HEK293 (cell line): ENCODE measurements at regions of chr11 and their contacts with region 1.

Region 1: GRCh38 chr11:73350908-73351636 is 25.1 kb upstream of the RELT start:
- H3K4me3 ChIP-seq: no peak overlapping the region
- H3K27ac ChIP-seq: no peak overlapping the region
- H3K4me1 ChIP-seq: no peaks in the 10 kb centered on the region
- CTCF ChIP-seq: peak; percentile 60

Region 2: DNA sequence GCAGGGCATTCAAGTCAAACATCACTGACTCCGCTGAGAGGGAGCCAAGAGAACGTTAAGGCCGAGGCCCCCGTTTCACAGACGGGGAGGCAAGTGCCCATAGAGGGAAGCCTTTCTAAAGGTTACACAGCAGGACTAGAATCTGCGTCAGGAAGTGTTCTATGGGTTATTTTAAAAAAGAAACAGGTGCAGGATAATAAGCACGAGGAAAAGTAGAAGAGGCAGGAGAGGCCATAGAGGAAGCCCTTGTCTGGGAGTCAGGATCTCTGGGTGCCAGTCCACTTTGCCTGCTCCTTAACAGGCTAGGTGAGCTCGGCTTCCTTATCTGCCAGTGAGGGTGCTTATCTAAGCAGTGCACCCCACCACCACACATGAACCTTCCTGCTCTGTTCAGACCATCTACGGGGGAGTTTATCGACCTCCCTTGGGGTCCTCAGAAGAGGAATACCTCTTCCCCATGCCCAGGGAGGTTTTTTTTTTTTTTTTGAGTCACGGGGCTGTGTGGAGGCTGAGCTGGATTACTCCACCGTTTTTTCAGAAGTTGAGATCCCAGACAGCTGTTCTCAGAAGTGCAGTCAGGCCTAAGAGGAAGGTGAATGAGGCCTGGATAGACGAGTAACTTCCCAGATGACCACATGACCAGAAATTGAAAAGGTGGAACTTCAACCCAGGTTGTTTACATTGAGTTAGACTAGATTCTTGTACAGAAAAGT is 207.8 kb before region 1 on chr11:
- CTCF ChIA-PET with region 1: no interaction called
- POLR2A ChIA-PET with region 1: no interaction called
- H3K4me3 ChIP-seq: no peak overlapping the region
- H3K27ac ChIP-seq: no peak overlapping the region; the same call in 1 of the 2 replicates
- H3K4me1 ChIP-seq: peaks cover 3% of the 10 kb centered on the region; the same call in 1 of the 2 replicates
- CTCF ChIP-seq: no peak

Region 3: GRCh38 chr11:73157053-73158010 is 193.7 kb before region 1 on chr11:
- CTCF ChIA-PET with region 1: no interaction called
- POLR2A ChIA-PET with region 1: no interaction called
- H3K4me3 ChIP-seq: no peak overlapping the region
- H3K27ac ChIP-seq: no peak overlapping the region
- H3K4me1 ChIP-seq: no peaks in the 10 kb centered on the region
- CTCF ChIP-seq: no peak

Region 4: GRCh38 chr11:73295231-73295995 is 55.7 kb before region 1 on chr11:
- CTCF ChIA-PET with region 1: interaction called, 10 read pairs
- POLR2A ChIA-PET with region 1: no interaction called
- H3K4me3 ChIP-seq: no peak overlapping the region
- H3K27ac ChIP-seq: no peak overlapping the region
- H3K4me1 ChIP-seq: no peaks in the 10 kb centered on the region
- CTCF ChIP-seq: no peak

Region 5: GRCh38 chr11:73335204-73335923 is 15.7 kb before region 1 on chr11:
- CTCF ChIA-PET with region 1: interaction called, 73 read pairs
- POLR2A ChIA-PET with region 1: no interaction called
- H3K4me3 ChIP-seq: no peak overlapping the region
- H3K27ac ChIP-seq: no peak overlapping the region; the same call in 1 of the 2 replicates
- H3K4me1 ChIP-seq: peaks cover 4% of the 10 kb centered on the region; the same call in 1 of the 2 replicates
- CTCF ChIP-seq: peak; percentile 73

Region 6: GRCh38 chr11:73372371-73372993 is 21.4 kb after region 1 on chr11:
- CTCF ChIA-PET with region 1: interaction called, 50 read pairs
- POLR2A ChIA-PET with region 1: no interaction called
- H3K4me3 ChIP-seq: no peak overlapping the region
- H3K27ac ChIP-seq: no peak overlapping the region
- H3K4me1 ChIP-seq: no peaks in the 10 kb centered on the region
- CTCF ChIP-seq: no peak

Region 7: DNA sequence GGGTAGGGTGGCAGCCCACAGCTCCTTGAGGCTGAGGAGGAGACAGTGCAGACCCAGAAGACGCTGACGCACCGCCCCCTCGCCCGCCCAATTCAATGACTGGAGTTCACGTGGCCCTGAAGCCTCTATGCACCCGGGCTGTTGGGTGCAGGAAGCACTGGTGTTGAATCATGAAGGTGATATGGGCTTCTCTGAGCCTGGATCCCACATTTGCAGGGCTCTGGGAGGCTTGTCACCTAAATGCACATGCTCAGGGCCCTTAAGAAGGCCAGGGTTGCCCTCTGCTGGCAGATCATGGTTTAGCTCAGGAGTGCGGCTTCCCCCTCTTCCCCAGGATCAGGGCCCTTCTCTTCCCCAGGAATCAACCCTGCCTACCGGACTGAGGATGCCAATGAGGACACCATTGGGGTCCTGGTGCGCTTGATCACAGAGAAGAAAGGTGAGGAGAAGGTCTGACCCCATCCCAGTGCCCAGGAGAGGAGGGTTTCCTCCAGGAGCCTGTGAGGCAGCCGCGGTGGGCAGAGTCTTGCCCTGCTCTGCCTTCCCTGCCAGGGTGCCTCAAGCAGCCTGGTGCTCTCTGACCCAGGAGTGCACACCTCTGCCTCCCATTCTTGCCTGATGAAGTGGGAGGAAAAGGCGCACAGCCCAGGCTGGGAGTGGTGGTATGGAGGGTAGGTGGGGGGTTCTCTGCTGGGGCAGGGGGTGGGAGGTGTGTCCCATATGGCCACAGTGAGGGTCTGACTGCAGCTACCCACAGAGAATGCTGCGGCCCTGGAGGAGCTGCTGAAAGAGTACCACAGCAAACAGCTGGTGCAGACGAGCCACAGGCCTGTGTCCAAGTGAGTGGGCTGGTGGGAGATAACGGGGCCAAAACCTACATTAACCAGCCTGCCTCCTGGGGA is 42.7 kb after region 1 on chr11:
- CTCF ChIA-PET with region 1: interaction called, 95 read pairs
- POLR2A ChIA-PET with region 1: interaction called, 6 read pairs
- H3K4me3 ChIP-seq: no peak overlapping the region
- H3K27ac ChIP-seq: no peak overlapping the region
- H3K4me1 ChIP-seq: no peaks in the 10 kb centered on the region
- CTCF ChIP-seq: peak; percentile 52; the same call in 1 of the 2 replicates